IMR-90 (cell line): ENCODE measurements at regions of chr6 and their contacts with region 1.

Region 1: DNA sequence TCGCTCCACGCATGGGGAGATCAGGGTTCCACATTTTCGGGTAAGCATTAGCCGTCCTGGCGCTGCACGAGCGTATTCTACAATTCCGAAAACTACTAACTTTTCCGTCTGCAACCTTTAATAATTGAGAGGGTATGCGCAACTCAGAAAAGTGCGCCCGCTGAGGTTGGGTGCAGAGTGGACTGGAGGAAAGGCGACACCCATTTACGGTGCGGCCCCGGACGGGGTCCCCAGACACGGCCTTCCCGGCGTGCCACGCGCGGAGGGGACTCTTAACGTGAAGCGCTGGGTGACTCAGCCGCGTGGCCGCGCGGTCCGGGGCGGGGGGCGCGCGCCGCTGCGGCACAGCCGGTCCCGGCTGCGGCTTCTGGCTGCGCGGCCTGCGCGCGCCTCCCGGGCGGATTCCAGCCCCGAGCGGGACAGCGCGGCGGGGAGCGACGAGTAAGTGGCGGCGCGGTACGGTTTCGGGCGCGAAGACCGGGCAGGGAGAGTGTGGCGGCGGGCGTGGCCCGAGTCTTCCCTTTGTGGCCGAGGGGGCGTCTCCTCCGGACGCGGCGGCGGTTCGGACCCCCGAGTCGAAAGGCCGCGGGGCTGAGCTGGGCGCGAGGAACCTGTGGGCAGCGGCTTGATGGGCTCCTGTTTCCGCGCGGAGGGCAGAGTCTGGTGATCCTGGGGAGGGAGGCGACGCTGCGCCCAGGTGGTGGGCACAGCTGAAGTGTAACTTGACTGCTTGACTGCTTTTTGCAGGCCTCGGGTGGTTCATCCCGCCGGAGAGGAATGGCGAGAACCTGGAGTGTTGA is at the starts of genes KCTD20 and PXT1:
- DNase-seq: peak; percentile 88
- ATAC-seq: peak; percentile 81
- H3K4me3 ChIP-seq: peak within 1 kb of the TSS; percentile 89
- H3K27ac ChIP-seq: peak within 1 kb of the TSS; percentile 97
- H3K4me1 ChIP-seq: peaks cover 6% of the 10 kb centered on the region
- H3K27me3 ChIP-seq: no peaks in the 10 kb centered on the region
- CTCF ChIP-seq: no peak
- POLR2A ChIP-seq: peak; percentile 91
- RAD21 ChIP-seq: peak; percentile 7; the same call in 1 of the 2 replicates
- total RNA-seq, gene KCTD20: 150 TPM in 2 replicates
- total RNA-seq, gene PXT1: not detected in 2 replicates

Region 2: DNA sequence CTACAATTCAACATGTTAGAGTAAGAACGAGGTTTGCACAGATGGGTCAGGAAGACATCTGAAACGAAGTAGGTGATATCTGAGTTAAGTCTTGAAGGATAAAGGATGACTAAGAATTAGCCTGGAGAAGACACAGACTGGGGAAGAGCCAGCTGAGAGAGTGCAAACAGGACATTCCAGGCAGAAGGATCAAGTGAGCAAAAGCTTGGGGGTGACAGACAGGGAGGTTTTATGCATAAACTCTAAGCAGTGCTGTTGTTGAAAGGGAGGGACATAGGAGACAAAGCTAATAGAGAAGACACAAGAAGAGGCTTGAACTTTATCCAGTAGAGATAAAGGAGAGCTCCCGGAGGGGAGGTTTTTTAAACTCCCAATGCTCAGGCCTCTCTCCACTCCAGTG is 40.4 kb before region 1 on chr6:
- CTCF ChIA-PET with region 1: no interaction called
- POLR2A ChIA-PET with region 1: no interaction called
- dilution Hi-C with region 1: no loop called
- in situ Hi-C with region 1: no loop called
- intact Hi-C with region 1: no loop called
- DNase-seq: peak; percentile 5
- ATAC-seq: peak; percentile 54; the same call in 1 of the 2 replicates
- H3K4me3 ChIP-seq: no peak overlapping the region
- H3K27ac ChIP-seq: no peak overlapping the region
- H3K4me1 ChIP-seq: no peaks in the 10 kb centered on the region
- H3K27me3 ChIP-seq: peaks cover 19% of the 10 kb centered on the region
- CTCF ChIP-seq: no peak
- POLR2A ChIP-seq: no peak
- RAD21 ChIP-seq: no peak

Region 3: GRCh38 chr6:36423101-36423824 is 19.6 kb before region 1 on chr6:
- CTCF ChIA-PET with region 1: interaction called, 3 read pairs
- POLR2A ChIA-PET with region 1: interaction called, 3 read pairs
- dilution Hi-C with region 1: no loop called
- in situ Hi-C with region 1: no loop called
- intact Hi-C with region 1: loop called (anchors 1 kb)
- DNase-seq: peak; percentile 97
- ATAC-seq: peak; percentile 98
- H3K4me3 ChIP-seq: peak overlapping the region; percentile 66
- H3K27ac ChIP-seq: peak overlapping the region; percentile 55; the same call in 1 of the 2 replicates
- H3K4me1 ChIP-seq: peaks cover 2% of the 10 kb centered on the region
- H3K27me3 ChIP-seq: no peaks in the 10 kb centered on the region
- CTCF ChIP-seq: peak; percentile 75
- POLR2A ChIP-seq: peak; percentile 30; the same call in 1 of the 2 replicates
- RAD21 ChIP-seq: peak; percentile 79